MCF 10A (cell line): ENCODE measurements at regions of chr15 and their contacts with region 1.

Region 1: GRCh38 chr15:40217159-40217824 is 21.6 kb upstream of the PAK6 start:
- DNase-seq: peak; percentile 70
- H3K4me3 Mint-ChIP-seq: no peak overlapping the region
- H3K27ac Mint-ChIP-seq: no peak overlapping the region
- H3K4me1 Mint-ChIP-seq: peaks cover 6% of the 10 kb centered on the region
- H3K27me3 Mint-ChIP-seq: no peaks in the 10 kb centered on the region
- CTCF ChIP-seq: peak; percentile 91

Region 2: GRCh38 chr15:40038638-40039543 is 178.4 kb before region 1 on chr15 and contains the start of gene SRP14:
- CTCF ChIA-PET with region 1: interaction called, 11 read pairs
- POLR2A ChIA-PET with region 1: interaction called, 3 read pairs
- intact Hi-C with region 1: no loop called
- DNase-seq: peak; percentile 93
- H3K4me3 Mint-ChIP-seq: peak within 1 kb of the TSS; percentile 92
- H3K27ac Mint-ChIP-seq: peak within 1 kb of the TSS; percentile 97
- H3K4me1 Mint-ChIP-seq: peaks cover 9% of the 10 kb centered on the region
- H3K27me3 Mint-ChIP-seq: no peaks in the 10 kb centered on the region
- CTCF ChIP-seq: no peak
- total RNA-seq, gene SRP14: 165 and 203 TPM in 2 replicates

Region 3: DNA sequence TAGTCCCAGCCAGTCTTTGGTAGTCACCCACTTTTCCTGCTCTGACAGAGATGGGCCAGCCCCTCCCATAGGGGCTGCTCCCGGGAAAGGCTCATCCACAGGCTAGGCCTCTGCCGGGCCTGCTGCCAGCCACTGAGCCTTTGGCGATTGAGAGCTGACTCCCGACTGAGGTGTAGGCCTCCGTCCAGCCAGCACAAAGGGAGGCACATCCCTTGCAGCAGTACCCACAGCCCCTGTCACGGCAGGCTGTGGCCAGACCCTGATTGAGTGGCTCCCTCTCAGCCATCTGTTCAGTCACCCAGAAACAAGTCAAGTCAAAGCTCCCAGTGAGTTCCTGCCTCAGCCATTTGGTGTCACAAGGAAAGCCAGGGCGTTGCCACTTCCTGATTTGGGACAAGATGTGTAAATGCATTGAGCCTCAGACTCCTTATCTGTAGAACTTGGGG is 15.4 kb after region 1 on chr15:
- CTCF ChIA-PET with region 1: interaction called, 68 read pairs
- POLR2A ChIA-PET with region 1: interaction called, 6 read pairs
- intact Hi-C with region 1: no loop called
- DNase-seq: peak; percentile 51
- H3K4me3 Mint-ChIP-seq: no peak overlapping the region
- H3K27ac Mint-ChIP-seq: peak overlapping the region; percentile 54
- H3K4me1 Mint-ChIP-seq: peaks cover 13% of the 10 kb centered on the region
- H3K27me3 Mint-ChIP-seq: no peaks in the 10 kb centered on the region
- CTCF ChIP-seq: no peak

Region 4: DNA sequence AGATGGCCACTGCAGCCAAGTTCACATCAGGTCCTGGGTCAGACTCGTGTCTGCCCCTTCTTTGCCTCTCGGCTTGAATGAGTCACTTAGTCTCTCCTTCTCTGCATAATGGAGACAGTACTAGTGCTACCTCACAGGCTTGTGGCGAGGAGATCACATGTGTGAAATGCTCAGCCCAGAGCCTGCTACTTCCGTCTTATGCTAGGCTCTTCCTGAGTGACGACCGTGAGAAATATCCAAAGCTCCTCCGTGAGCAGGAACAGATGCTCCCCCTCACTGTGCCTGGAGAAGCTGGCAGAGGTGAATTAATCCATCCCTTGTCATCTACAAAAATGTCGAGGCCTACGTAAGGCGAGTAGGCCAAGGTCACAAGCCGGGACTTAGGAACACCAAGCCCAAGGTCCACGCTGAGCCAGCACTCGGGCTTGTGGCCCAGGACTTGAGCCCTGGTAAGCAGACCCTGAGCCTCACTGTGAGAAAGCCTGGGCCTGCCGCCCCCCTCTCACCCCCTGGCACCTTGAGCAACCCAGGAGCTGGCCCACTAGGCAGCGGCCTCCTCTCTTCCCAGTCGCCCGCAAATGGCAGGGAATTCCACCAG is 39.4 kb after region 1 on chr15:
- CTCF ChIA-PET with region 1: interaction called, 32 read pairs
- POLR2A ChIA-PET with region 1: interaction called, 3 read pairs
- intact Hi-C with region 1: no loop called
- DNase-seq: no peak
- H3K4me3 Mint-ChIP-seq: no peak overlapping the region
- H3K27ac Mint-ChIP-seq: no peak overlapping the region
- H3K4me1 Mint-ChIP-seq: no peaks in the 10 kb centered on the region
- H3K27me3 Mint-ChIP-seq: no peaks in the 10 kb centered on the region
- CTCF ChIP-seq: no peak

Region 5: DNA sequence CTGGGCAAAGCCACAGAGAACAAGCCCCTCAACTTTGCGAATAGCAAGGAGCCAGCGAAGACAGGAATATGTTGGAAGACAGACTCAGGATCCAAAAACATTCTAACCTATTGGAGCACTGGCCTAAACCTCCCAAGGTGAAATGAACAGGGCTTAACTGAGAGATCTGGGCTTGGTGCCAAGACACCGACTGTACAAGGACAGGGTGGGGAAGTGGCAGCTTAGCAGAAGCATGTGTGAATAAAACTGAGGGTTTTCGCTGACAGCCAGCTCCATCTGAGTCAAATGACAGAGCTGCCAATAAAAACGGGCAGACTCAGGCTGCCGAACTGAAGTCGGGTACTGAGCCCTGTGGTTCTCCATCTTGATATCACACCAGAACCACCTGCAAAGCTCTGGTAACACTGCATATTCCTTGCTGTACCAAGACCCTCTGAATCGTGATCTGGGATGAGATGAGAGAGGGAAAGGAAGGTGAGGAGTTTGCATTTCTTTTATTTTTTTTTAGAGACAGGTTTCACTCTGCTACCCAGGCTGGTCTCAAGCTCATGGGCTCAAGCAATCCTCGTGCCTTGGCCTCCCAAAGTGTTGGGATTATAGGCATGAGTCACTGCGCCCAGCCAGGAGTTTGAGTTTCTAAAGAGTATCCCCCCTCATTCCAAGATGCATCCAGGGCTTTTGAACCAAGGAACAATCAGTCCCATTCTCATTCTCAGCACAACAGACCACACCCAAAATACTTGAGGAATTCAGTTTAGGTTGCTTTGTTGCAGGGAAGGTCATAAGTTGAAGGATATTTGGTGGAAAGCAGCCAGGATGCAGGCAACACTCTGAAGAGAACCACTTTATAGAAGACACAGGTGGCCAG is 96.5 kb after region 1 on chr15:
- CTCF ChIA-PET with region 1: interaction called, 13 read pairs
- POLR2A ChIA-PET with region 1: no interaction called
- intact Hi-C with region 1: no loop called
- DNase-seq: peak; percentile 94
- H3K4me3 Mint-ChIP-seq: peak overlapping the region; percentile 18
- H3K27ac Mint-ChIP-seq: no peak overlapping the region
- H3K4me1 Mint-ChIP-seq: peaks cover 13% of the 10 kb centered on the region
- H3K27me3 Mint-ChIP-seq: no peaks in the 10 kb centered on the region
- CTCF ChIP-seq: no peak

Region 6: DNA sequence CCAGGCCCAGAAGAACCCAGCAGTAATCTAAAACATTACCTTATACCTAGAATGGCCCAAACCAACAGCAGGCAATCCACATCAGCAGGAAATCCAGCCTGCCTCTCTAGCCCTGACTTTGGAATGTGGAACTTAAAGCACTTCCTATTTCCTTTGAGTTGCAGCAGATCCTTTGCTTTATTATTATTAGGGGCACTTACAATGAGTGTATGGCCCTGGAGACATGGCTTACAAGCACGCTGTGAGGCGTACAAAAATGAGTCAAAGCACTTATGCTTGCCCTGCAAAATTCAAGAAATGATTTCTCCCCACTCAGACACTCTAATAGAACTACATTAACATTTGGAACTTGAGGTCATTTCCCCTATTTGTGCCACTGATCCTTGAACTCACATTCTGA is 155.7 kb after region 1 on chr15:
- CTCF ChIA-PET with region 1: interaction called, 11 read pairs
- POLR2A ChIA-PET with region 1: interaction called, 3 read pairs
- intact Hi-C with region 1: no loop called
- DNase-seq: no peak
- H3K4me3 Mint-ChIP-seq: no peak overlapping the region
- H3K27ac Mint-ChIP-seq: no peak overlapping the region
- H3K4me1 Mint-ChIP-seq: no peaks in the 10 kb centered on the region
- H3K27me3 Mint-ChIP-seq: no peaks in the 10 kb centered on the region
- CTCF ChIP-seq: no peak